Common myeloid progenitor, CD34-positive (primary cell): ENCODE measurements at regions of chr1 and their contacts with region 1.

Region 1: DNA sequence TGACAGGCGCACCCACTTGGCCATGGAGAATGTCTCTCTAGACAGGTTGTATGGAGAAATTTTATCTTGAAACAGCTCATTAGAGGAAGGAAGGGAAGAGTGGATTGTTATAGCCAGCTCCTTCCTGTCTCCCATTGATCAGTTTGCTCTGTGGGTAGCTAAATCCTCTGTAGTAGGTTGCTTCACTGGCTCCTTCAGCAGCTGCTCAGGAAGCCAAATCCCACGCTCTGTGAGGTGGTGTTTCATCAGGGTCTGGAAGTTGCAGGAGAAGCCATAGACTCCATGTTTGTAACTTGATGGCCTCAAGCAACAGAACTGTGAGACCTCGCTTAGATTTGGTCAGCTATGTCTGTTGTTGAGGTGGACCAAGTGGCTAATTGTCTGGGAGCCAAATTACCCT is 6.8 kb upstream of the NFYC start:
- DNase-seq: no peak
- H3K4me3 ChIP-seq: no peak overlapping the region
- H3K27ac ChIP-seq: no peak overlapping the region
- H3K4me1 ChIP-seq: peaks cover 0 to 7% (median 1%) of the 10 kb centered on the region in 4 experiments
- H3K27me3 ChIP-seq: peaks cover 0 to 2% (median 0%) of the 10 kb centered on the region in 5 experiments

Region 2: DNA sequence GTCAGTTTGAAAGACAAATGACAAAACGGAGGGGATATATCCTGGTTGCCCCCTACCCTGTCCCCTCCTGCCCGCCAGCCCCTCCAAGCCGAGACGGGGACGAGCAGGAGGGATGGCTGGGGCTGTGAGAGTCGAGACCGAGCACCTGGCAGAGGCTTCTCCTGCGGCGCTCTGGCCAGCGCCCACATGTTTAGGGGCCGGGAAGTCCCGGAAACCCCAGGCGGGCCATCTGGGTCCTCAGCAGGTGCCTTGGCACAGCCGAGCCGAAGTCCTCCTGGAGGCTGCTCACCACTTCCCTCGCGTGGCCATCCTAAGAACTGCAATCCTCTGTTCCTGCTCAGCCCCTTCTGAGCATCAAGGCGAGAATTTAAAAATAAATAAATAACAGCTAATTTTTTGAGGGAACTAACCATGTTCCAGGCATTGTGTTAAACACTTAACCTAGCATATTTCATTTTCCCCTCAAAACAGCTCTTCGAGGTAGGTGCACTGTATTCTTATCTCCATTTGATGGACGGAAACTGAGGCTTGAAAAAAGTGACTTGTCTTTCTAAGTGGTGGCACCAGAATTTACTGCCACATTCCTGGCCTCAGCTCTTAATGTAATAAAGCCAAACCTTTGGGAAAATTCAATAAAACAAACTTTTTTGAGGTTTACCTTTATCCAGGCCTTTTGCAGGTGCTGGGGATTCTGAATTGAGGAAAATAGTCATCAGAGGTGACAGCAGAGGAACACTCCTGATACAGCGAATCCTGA is 15.7 kb before region 1 on chr1:
- CTCF ChIA-PET with region 1: interaction called, 17 read pairs
- POLR2A ChIA-PET with region 1: no interaction called
- DNase-seq: peak; percentile 80 to 94 (median 92)
- H3K4me3 ChIP-seq: peak overlapping the region in 5 of 7 experiments; percentile 15 to 48 (median 37)
- H3K27ac ChIP-seq: no peak overlapping the region
- H3K4me1 ChIP-seq: peaks cover 0 to 15% (median 14%) of the 10 kb centered on the region in 4 experiments
- H3K27me3 ChIP-seq: peaks cover 0 to 26% (median 8%) of the 10 kb centered on the region in 5 experiments